GM12878 (cell line): ENCODE measurements at regions of chr15 and their contacts with region 1.

Region 1: GRCh38 chr15:85330901-85331588 is 49.4 kb upstream of the AKAP13 start:
- DNase-seq: peak; percentile 90
- ATAC-seq: peak; percentile 83
- H3K4me3 ChIP-seq: peak overlapping the region; percentile 70
- H3K27ac ChIP-seq: peak overlapping the region; percentile 84
- H3K4me1 ChIP-seq: peaks cover 44% of the 10 kb centered on the region
- H3K27me3 ChIP-seq: no peaks in the 10 kb centered on the region
- CTCF ChIP-seq: peak; percentile 89 to 99 (median 96)
- EP300 ChIP-seq: peak in 1 of 2 experiments; percentile 56; a peak in 1 of 4 replicates
- POLR2A ChIP-seq: peak; percentile 61
- RAD21 ChIP-seq: peak; percentile 98

Region 2: DNA sequence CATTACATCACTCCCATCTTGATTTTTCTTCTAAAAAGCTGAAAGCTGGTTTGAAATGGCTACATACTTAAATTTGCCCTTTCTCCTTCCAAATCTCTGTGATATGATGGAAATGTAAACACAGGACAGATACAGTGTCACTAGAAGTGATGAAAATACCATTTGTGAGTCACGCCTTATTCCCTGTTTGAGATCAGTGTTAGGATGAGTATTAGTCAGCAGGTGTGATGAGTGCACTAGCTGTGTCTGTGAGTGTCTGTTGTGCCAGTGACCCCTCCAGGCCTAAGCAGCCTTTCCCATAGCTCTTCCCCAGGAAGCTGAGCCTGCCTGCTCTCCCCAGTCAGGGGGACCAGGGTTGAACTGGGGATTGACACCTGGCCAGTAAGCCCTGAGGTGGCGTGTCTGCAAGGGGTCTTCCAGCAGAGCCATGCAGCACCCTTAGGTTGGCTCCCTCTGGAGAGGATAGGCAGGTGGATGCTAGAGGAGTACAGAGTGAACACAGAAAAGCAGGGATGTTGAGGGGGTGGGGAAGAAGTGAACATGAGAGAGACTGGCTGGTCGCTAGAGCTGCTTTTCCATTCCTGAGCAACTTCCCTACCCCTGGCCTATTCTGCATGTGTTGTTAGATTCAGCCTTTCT is 257.4 kb before region 1 on chr15:
- CTCF ChIA-PET with region 1: no interaction called
- POLR2A ChIA-PET with region 1: no interaction called
- RAD21 ChIA-PET with region 1: no interaction called
- SMC1A ChIA-PET with region 1: no interaction called
- in situ Hi-C with region 1: no loop called
- intact Hi-C with region 1: no loop called
- DNase-seq: no peak
- ATAC-seq: peak; percentile 97
- H3K4me3 ChIP-seq: no peak overlapping the region
- H3K27ac ChIP-seq: no peak overlapping the region
- H3K4me1 ChIP-seq: no peaks in the 10 kb centered on the region
- H3K27me3 ChIP-seq: no peaks in the 10 kb centered on the region
- CTCF ChIP-seq: no peak; a peak in 1 of 6 replicates
- EP300 ChIP-seq: peak in 1 of 2 experiments; percentile 49; a peak in 1 of 4 replicates
- POLR2A ChIP-seq: no peak
- RAD21 ChIP-seq: peak; percentile 11; the same call in 1 of the 2 replicates

Region 3: DNA sequence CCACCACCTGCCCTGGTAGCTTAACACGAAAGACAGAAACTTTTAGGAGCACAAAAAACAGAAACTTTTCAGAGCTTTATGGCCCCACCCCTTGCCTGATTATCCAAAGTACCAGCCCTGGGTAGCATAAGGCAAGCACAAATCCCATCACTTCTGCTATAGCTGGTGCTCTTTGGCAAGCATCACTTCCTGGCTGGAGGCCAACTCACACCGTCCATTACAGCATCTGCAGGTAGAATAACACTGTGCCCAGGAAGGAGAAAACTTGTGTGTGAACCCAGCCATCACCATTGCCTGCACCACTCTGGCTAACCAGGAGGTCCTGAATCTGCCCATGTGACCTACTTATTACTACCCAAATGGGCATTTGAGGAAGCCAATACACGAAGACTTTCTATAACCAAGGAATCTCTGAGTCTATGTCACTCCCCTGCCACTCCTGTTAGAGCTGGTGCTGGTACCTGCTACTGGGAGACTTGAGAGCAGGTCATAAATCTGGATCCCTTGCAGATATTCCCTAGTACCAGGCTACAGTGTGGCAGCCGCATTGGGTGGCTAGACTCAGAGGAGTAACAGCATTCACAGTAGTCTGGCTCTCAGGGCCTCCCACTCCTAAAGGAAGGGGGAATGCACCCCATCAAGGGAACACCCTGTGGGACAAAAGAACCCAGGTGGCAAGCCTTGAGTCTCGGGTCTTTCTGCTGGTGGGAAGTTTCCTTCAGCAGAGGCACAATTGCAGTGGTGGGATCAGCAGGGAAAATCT is 23.9 kb before region 1 on chr15:
- CTCF ChIA-PET with region 1: interaction called, 115 read pairs
- POLR2A ChIA-PET with region 1: interaction called, 13 read pairs
- RAD21 ChIA-PET with region 1: interaction called, 49 read pairs
- SMC1A ChIA-PET with region 1: interaction called, 177 read pairs
- in situ Hi-C with region 1: no loop called
- intact Hi-C with region 1: no loop called
- DNase-seq: no peak
- ATAC-seq: peak; percentile 25
- H3K4me3 ChIP-seq: no peak overlapping the region
- H3K27ac ChIP-seq: no peak overlapping the region
- H3K4me1 ChIP-seq: peaks cover 21% of the 10 kb centered on the region
- H3K27me3 ChIP-seq: no peaks in the 10 kb centered on the region
- CTCF ChIP-seq: no peak
- EP300 ChIP-seq: no peak
- POLR2A ChIP-seq: no peak
- RAD21 ChIP-seq: no peak

Region 4: DNA sequence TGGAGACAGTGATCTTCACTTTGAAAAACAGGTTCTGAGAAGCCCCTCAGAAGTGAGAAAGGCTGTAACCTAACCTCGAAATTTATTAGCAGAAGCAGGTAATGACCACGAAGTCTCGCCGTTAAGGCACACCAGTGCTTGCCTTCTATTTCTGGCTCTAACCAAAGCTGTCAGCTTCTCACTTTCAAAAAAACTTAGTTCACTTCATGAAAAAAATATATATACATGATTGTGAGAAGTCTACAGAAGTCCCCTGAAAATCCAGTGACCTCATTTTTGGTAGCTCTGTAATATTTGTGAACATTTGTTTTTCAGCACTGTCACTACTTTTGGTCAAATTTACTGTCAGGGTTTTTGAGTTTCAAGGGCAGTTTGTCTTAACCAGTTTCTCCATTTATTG is 30.3 kb after region 1 on chr15:
- CTCF ChIA-PET with region 1: interaction called, 9 read pairs
- POLR2A ChIA-PET with region 1: interaction called, 8 read pairs
- RAD21 ChIA-PET with region 1: interaction called, 28 read pairs
- SMC1A ChIA-PET with region 1: interaction called, 45 read pairs
- in situ Hi-C with region 1: no loop called
- intact Hi-C with region 1: no loop called
- DNase-seq: peak; percentile 66
- ATAC-seq: peak; percentile 87
- H3K4me3 ChIP-seq: peak overlapping the region; percentile 40; the same call in 1 of the 2 replicates
- H3K27ac ChIP-seq: peak overlapping the region; percentile 72
- H3K4me1 ChIP-seq: peaks cover 32% of the 10 kb centered on the region
- H3K27me3 ChIP-seq: no peaks in the 10 kb centered on the region
- CTCF ChIP-seq: no peak
- EP300 ChIP-seq: peak; percentile 60 to 81; a peak in 2 of 4 replicates
- POLR2A ChIP-seq: no peak
- RAD21 ChIP-seq: no peak

Region 5: GRCh38 chr15:85407804-85408746 is 77.0 kb after region 1 on chr15:
- CTCF ChIA-PET with region 1: interaction called, 119 read pairs
- POLR2A ChIA-PET with region 1: interaction called, 24 read pairs
- RAD21 ChIA-PET with region 1: interaction called, 202 read pairs
- SMC1A ChIA-PET with region 1: interaction called, 136 read pairs
- in situ Hi-C with region 1: loop called (anchors 5 kb)
- intact Hi-C with region 1: loop called (anchors 1 kb)
- DNase-seq: peak; percentile 84
- ATAC-seq: peak; percentile 77
- H3K4me3 ChIP-seq: peak overlapping the region; percentile 36; the same call in 1 of the 2 replicates
- H3K27ac ChIP-seq: peak overlapping the region; percentile 75
- H3K4me1 ChIP-seq: peaks cover 81% of the 10 kb centered on the region
- H3K27me3 ChIP-seq: no peaks in the 10 kb centered on the region
- CTCF ChIP-seq: no peak
- EP300 ChIP-seq: peak in 1 of 2 experiments; percentile 75; a peak in 3 of 4 replicates
- POLR2A ChIP-seq: no peak
- RAD21 ChIP-seq: no peak

Region 6: DNA sequence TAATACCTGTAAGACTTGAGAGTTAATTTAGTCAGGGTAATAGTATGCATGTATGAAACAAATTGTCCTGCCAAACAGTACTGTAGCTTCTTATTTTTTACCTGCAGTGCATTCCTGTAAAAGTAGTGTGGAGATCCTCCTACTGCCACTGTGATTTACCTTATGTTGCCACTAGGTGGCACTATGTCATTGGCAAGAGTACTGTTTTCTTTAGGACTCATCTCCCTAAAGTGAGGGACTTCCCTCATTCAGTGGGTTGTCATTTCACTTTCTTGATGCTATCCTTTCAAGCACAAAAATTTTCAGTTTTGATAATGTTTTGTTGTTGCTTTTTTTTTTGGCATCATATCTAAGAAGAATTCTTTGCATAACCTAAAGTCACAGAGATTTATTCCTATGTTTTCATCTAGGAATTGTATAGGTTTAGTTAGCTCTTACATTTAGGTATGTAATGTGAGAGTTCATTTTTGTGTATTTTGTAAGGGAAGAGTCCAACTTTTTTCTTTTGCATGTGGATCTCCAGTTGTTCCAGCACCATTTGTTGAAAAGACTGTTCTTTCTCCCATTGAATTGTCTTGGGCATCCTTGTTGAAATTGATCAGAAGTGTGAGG is 155.0 kb after region 1 on chr15:
- CTCF ChIA-PET with region 1: interaction called, 23 read pairs
- POLR2A ChIA-PET with region 1: no interaction called
- RAD21 ChIA-PET with region 1: interaction called, 11 read pairs
- SMC1A ChIA-PET with region 1: interaction called, 15 read pairs
- in situ Hi-C with region 1: no loop called
- intact Hi-C with region 1: loop called (anchors 5 kb)
- DNase-seq: peak; percentile 59
- ATAC-seq: peak; percentile 69
- H3K4me3 ChIP-seq: no peak overlapping the region
- H3K27ac ChIP-seq: no peak overlapping the region
- H3K4me1 ChIP-seq: peaks cover 35% of the 10 kb centered on the region
- H3K27me3 ChIP-seq: no peaks in the 10 kb centered on the region
- CTCF ChIP-seq: peak; percentile 64 to 76 (median 67)
- EP300 ChIP-seq: no peak
- POLR2A ChIP-seq: no peak
- RAD21 ChIP-seq: peak; percentile 86